PC-3 (cell line): ENCODE measurements at regions of chr1 and their contacts with region 1.

Region 1: DNA sequence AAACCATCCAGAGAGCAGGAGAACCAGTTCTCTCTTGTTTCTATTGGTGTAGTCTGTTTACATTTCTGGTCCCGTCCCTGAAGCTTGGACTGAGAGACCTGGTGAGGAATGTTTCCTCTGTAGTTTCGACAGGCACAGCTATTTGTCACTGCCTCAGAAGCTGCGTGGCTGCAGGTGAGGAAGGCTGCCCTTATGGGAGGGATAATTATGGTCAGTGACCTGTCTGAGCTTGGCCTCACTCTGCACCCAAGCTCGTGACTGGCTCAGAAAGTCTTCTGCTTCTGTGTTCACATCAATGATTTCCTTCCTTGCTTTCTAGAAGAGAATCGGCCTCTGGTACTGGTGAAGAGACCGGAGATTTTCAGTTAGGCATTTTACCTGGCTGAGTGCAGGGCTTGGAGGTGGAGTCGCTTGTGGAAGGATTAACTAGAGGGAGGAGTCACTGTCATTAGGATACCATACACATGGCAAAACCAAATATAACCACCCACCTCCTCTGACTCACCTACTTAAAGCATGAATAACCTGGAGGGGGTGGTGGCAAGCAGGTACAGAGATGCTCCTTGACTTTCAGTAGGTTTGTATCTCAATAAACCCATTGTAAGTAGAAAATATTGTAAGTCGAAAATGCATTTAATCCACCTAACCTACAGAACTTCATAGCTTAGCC is 19.9 kb upstream of the WDR26 start:
- DNase-seq: peak; percentile 95
- ATAC-seq: peak; percentile 71
- H3K4me3 ChIP-seq: peak overlapping the region; percentile 64
- H3K27ac ChIP-seq: peak overlapping the region; percentile 91
- H3K4me1 ChIP-seq: peaks cover 42% of the 10 kb centered on the region
- H3K27me3 ChIP-seq: no peaks in the 10 kb centered on the region
- CTCF ChIP-seq: no peak

Region 2: DNA sequence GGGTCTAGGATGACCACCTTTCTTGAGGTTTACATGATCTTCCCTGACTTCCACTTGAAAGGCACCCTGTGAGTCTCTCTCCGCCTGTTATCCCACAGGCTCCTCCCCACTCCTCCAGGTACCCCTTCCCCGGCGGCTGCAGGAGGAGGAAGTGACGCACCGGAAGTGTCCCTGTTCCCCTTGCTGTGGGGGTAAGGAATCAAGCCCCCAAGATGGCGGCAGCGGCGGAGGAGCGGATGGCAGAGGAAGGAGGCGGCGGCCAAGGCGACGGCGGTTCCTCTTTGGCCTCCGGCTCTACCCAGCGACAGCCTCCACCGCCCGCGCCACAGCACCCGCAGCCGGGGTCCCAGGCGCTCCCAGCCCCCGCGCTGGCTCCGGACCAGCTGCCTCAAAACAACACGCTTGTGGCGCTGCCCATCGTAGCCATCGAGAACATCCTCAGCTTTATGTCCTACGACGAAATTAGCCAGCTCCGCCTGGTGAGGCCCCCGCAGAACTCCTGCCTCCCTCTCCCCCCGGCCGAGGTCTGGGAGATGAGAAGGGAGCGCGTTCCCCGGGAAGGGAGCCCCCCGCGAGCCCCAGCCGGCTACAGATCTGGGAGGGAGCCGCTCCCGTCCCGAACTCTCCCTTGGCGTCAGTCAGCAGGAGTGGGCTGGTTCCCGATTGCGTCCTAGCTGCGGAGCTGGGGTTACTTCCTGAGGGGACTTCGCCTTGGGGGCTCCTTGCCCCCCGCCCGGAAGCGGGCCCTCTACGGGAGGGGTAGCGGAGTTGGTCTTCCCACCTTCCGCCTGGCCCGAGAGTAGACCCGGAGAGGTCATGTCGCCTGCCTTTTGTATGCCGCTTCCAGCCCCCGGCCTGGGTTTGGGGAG is 340.4 kb before region 1 on chr1 and contains the start of gene FBXO28:
- CTCF ChIA-PET with region 1: no interaction called
- POLR2A ChIA-PET with region 1: no interaction called
- intact Hi-C with region 1: loop called (anchors 2 kb)
- DNase-seq: peak; percentile 98
- ATAC-seq: peak; percentile 94
- H3K4me3 ChIP-seq: peak within 1 kb of the TSS; percentile 91
- H3K27ac ChIP-seq: peak within 1 kb of the TSS; percentile 48
- H3K4me1 ChIP-seq: peaks cover 26% of the 10 kb centered on the region
- H3K27me3 ChIP-seq: no peaks in the 10 kb centered on the region
- CTCF ChIP-seq: no peak
- total RNA-seq, gene FBXO28: 57.7 and 82.6 TPM in 2 replicates

Region 3: GRCh38 chr1:224356685-224357625 is 97.6 kb before region 1 on chr1 and contains the start of gene CNIH4:
- CTCF ChIA-PET with region 1: no interaction called
- POLR2A ChIA-PET with region 1: no interaction called
- intact Hi-C with region 1: loop called (anchors 1 kb)
- DNase-seq: peak; percentile 98
- ATAC-seq: peak; percentile 95
- H3K4me3 ChIP-seq: peak within 1 kb of the TSS; percentile 68
- H3K27ac ChIP-seq: peak within 1 kb of the TSS; percentile 1
- H3K4me1 ChIP-seq: peaks cover 14% of the 10 kb centered on the region
- H3K27me3 ChIP-seq: no peaks in the 10 kb centered on the region
- CTCF ChIP-seq: no peak
- total RNA-seq, gene CNIH4: 49.2 and 89.9 TPM in 2 replicates

Region 4: GRCh38 chr1:224411766-224412165 is 42.8 kb before region 1 on chr1:
- CTCF ChIA-PET with region 1: no interaction called
- POLR2A ChIA-PET with region 1: interaction called, 4 read pairs
- intact Hi-C with region 1: loop called (anchors 10 kb)
- DNase-seq: no peak
- ATAC-seq: peak; percentile 64
- H3K4me3 ChIP-seq: no peak overlapping the region
- H3K27ac ChIP-seq: no peak overlapping the region
- H3K4me1 ChIP-seq: peaks cover 14% of the 10 kb centered on the region
- H3K27me3 ChIP-seq: no peaks in the 10 kb centered on the region
- CTCF ChIP-seq: no peak

Region 5: DNA sequence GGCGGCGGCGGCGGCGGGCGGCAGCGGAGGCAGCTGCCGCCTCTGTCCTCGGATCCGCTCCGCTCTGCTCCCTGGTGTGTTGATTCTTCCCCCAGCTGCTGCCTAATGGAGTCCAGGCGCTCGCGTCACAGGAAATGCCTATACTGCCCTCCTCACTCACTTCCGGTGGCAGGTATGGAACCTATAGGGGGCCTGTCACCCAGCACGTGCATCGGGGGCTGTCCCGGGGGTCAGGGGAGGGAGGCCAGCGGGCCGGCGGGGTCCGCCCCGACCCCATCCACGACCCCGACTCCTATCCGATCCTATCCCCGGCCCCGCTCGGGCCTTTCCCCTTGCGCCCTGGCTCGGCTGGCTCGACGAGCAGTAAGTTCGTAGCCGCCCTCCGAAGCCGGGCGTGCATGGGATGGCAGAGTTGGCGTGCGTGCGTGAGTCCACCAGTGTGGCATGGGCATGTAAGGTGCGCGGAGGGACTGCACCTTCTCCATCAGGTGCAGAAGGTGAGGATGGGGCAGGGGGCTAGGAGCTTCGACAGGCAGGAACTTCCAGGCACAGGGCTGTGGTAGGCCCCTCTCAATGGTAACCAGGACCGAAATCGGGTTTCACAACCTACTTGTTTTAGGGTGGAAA is 19.7 kb before region 1 on chr1 and contains the start of gene WDR26:
- CTCF ChIA-PET with region 1: interaction called, 11 read pairs
- POLR2A ChIA-PET with region 1: interaction called, 9 read pairs
- intact Hi-C with region 1: loop called (anchors 1 kb)
- DNase-seq: peak; percentile 81
- ATAC-seq: peak; percentile 76
- H3K4me3 ChIP-seq: peak within 1 kb of the TSS; percentile 83
- H3K27ac ChIP-seq: peak within 1 kb of the TSS; percentile 67
- H3K4me1 ChIP-seq: peaks cover 46% of the 10 kb centered on the region
- H3K27me3 ChIP-seq: no peaks in the 10 kb centered on the region
- CTCF ChIP-seq: 0 out of 2 replicates have a peak, but pooled peaks have one; percentile 24
- total RNA-seq, gene WDR26: 40.7 and 45.2 TPM in 2 replicates

Region 6: DNA sequence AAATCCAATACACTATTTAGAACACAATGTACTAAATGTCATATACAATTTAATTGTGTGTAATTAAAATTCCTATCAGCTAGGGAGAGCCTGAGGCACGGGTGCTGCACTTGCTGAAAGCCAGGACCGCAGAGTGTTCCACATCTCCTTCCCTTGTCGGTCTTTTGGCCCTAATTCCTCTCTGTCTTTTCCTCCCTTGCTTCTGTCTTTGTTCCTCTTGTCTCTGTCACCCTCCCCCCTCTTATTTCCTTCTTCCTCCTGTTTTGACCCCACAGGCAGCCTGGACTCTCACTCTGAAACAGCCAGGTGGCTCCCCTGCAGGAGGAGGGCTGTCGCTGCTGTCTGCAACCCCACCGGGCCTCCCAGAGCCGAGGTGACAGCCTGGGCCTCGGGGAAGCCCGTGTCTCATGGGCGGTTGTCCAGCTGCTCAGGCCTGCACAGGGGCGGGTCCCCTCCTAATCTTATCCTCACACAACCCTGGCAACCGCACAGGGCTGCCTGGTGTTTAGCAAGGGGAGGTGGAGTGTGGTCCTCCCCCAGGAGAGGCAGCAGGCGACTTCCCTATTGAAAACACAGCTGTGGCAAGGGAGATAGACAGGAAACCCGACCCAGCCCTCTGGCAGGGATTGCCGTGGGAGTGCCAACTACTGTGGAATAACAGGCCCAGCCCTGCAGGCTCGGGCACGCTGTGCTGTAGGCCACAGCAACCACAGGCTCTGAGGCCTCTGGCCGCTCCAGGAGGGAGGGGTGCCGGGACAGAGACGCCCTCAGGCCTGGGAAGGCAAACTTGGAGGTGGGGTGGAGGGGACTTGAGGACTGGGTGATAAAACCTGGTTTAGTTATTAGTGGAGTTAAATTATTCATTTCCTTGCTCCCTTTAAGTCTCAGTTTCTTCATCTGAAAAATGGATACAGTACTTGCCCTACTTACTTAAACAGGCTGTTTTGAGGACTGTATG is 48.9 kb after region 1 on chr1:
- CTCF ChIA-PET with region 1: interaction called, 9 read pairs
- POLR2A ChIA-PET with region 1: interaction called, 8 read pairs
- intact Hi-C with region 1: loop called (anchors 2 kb)
- DNase-seq: peak; percentile 95
- ATAC-seq: peak; percentile 91
- H3K4me3 ChIP-seq: peak overlapping the region; percentile 36; the same call in 1 of the 2 replicates
- H3K27ac ChIP-seq: peak overlapping the region; percentile 76
- H3K4me1 ChIP-seq: peaks cover 40% of the 10 kb centered on the region
- H3K27me3 ChIP-seq: no peaks in the 10 kb centered on the region
- CTCF ChIP-seq: peak; percentile 42; the same call in 1 of the 2 replicates